AG04449 (cell line): ENCODE measurements at regions of chr1 and their contacts with region 1.

Region 1: DNA sequence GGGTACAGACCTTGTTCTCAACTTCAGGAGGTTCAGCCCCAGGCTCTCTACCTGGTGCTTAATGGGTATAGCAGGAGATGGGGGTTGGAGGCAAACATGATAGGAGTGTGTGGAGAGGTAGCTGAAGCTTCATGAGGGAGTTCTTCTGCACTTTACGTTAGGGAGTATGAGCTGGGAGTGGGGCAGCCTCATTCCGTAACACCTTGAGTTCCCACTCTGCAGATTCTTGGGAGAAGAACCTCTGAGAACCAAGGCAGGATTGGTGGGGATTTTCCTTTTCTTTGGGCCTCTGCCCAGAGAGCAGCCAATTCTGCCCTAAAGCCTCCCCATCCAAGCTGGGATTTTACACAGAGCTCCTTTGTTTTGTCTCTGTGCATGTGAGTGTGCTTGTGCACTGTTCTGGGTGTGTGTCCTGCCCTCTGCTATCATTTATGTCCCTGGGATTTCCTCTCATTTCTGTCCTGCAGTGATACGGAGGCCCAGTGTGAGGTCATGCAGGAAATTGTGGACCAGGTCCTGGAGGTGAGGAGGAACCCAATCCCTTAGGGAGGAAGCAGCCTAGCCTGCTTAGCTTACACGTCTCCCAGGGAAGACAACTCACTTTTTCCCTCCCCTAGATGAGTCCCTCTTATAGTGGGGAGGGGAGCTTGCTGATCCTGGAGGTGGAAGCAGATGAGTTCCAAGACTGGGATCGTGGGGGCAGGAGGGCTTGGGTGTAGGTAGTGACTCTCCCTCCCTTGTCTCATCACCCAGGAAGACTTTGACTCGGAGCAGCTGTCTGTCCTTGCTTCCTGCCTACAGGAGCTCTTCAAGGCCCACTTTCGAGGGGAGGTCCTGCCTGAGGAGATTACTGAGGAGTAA is 11.6 kb upstream of the SLC27A3 start:
- DNase-seq: no peak
- H3K4me3 ChIP-seq: no peak overlapping the region
- CTCF ChIP-seq: no peak

Region 2: GRCh38 chr1:153441238-153441933 is 322.2 kb before region 1 on chr1:
- CTCF ChIA-PET with region 1: no interaction called
- POLR2A ChIA-PET with region 1: no interaction called
- DNase-seq: no peak
- H3K4me3 ChIP-seq: no peak overlapping the region
- CTCF ChIP-seq: no peak

Region 3: DNA sequence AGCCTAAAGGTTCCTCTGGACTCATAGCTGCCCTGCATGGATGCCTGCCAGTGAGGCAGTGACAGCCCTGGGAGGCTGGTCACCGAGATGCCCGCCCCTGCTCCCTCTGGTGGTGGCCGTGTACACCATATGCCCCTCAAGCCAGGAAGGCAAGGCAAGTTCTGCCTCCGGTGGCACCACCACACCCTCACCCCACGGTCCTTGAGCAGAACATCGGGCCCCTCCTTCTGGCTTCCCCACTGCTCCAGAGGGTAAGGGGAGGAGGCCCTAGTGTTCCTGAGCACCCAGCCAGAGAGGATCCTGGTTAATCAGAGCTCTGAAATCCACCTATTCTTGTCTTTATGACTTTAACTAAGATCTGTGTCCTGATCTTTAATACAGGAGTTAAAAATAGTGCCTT is 145.9 kb before region 1 on chr1:
- CTCF ChIA-PET with region 1: no interaction called
- POLR2A ChIA-PET with region 1: no interaction called
- DNase-seq: no peak
- H3K4me3 ChIP-seq: no peak overlapping the region
- CTCF ChIP-seq: peak; percentile 81

Region 4: DNA sequence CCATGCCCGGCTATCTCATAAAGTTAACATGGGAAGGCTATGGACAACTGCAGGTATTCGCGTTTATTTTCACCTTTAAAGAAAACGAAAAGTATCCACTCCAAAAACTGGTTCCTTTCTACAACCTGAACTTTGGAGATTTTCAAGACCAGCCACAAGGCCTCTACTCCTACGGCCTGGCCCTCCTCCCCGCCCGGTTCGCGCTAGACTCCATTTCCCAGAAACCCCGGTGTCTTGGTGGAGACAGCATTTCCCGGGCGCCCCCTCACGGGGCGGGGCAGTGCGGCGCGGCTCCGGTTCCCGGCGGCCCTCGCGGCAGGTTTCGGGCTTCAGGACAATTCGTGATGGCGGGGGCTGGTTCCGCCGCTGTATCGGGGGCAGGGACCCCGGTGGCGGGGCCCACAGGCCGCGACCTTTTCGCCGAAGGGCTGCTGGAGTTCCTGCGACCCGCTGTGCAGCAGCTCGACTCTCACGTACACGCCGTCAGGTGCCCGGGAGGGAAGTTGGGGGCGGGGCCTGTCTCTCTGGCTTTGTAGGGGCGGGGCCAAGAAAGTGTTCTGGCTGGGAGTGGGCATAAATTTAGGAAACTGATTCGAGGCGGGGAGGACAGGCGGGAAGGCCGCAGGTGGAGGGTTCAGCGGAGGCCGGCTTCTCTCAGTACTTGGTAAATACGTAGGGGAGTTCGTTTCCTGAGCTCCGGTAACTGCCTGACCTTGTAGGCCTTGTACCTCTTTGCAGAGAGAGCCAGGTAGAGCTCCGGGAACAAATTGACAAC is 105.0 kb before region 1 on chr1 and contains the start of gene SNAPIN:
- CTCF ChIA-PET with region 1: no interaction called
- POLR2A ChIA-PET with region 1: no interaction called
- DNase-seq: peak; percentile 23
- H3K4me3 ChIP-seq: peak within 1 kb of the TSS; percentile 92
- CTCF ChIP-seq: peak; percentile 45

Region 5: DNA sequence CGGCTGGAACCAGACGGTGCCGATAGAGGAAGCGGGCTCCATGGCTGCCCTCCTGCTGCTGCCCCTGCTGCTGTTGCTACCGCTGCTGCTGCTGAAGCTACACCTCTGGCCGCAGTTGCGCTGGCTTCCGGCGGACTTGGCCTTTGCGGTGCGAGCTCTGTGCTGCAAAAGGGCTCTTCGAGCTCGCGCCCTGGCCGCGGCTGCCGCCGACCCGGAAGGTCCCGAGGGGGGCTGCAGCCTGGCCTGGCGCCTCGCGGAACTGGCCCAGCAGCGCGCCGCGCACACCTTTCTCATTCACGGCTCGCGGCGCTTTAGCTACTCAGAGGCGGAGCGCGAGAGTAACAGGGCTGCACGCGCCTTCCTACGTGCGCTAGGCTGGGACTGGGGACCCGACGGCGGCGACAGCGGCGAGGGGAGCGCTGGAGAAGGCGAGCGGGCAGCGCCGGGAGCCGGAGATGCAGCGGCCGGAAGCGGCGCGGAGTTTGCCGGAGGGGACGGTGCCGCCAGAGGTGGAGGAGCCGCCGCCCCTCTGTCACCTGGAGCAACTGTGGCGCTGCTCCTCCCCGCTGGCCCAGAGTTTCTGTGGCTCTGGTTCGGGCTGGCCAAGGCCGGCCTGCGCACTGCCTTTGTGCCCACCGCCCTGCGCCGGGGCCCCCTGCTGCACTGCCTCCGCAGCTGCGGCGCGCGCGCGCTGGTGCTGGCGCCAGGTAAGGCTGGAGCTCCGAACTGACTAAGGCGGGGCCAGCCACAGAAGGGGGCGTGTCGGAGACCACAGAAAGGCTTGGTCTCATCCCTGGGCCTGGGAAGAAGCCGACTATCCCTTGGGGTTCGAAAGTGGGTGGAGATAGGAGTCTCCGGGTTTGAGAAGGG is 12.1 kb after region 1 on chr1:
- CTCF ChIA-PET with region 1: interaction called, 10 read pairs
- POLR2A ChIA-PET with region 1: interaction called, 4 read pairs
- DNase-seq: no peak
- H3K4me3 ChIP-seq: peak overlapping the region; percentile 64
- CTCF ChIP-seq: no peak

Region 6: GRCh38 chr1:153903841-153904455 is 140.4 kb after region 1 on chr1:
- CTCF ChIA-PET with region 1: no interaction called
- POLR2A ChIA-PET with region 1: no interaction called
- DNase-seq: no peak
- H3K4me3 ChIP-seq: no peak overlapping the region
- CTCF ChIP-seq: no peak